ENCODE measurements at regions of chr15 and their contacts with region 1.

Region 1: GRCh38 chr15:51750792-51751685 is at the start of gene TMOD2:
- DNase-seq: peak in 7 of 9 experiments; percentile 38 to 75 (median 52)
- ATAC-seq: peak; percentile 88
- H3K4me3 ChIP-seq: peak within 1 kb of the TSS; percentile 63 to 64
- H3K4me3 Mint-ChIP-seq: peak within 1 kb of the TSS; percentile 89
- H3K27ac ChIP-seq: peak within 1 kb of the TSS in 1 of 2 experiments; percentile 7
- H3K27ac Mint-ChIP-seq: peak within 1 kb of the TSS; percentile 74
- H3K4me1 ChIP-seq: peaks cover 13% of the 10 kb centered on the region
- H3K4me1 Mint-ChIP-seq: peaks cover 46% of the 10 kb centered on the region
- H3K27me3 ChIP-seq: peaks cover 0 to 2% of the 10 kb centered on the region in 2 experiments
- H3K27me3 Mint-ChIP-seq: no peaks in the 10 kb centered on the region
- CTCF ChIP-seq: no peak
- total RNA-seq, gene TMOD2: 5.1 to 5.3 TPM

Region 2: GRCh38 chr15:51731549-51732267 is 19.3 kb before region 1 on chr15:
- CTCF ChIA-PET with region 1: interaction called, 5 read pairs
- POLR2A ChIA-PET with region 1: interaction called, 22 read pairs
- intact Hi-C with region 1: loop called in 1 of 2 experiments (anchors 1 kb)
- DNase-seq: peak in 6 of 9 experiments; percentile 26 to 89 (median 50)
- ATAC-seq: peak; percentile 65
- H3K4me3 ChIP-seq: peak overlapping the region; percentile 38 to 42
- H3K4me3 Mint-ChIP-seq: peak overlapping the region; percentile 93
- H3K27ac ChIP-seq: peak overlapping the region; percentile 60 to 92
- H3K27ac Mint-ChIP-seq: peak overlapping the region; percentile 99
- H3K4me1 ChIP-seq: peaks cover 72% of the 10 kb centered on the region
- H3K4me1 Mint-ChIP-seq: peaks cover 92% of the 10 kb centered on the region
- H3K27me3 ChIP-seq: no peaks in the 10 kb centered on the region
- H3K27me3 Mint-ChIP-seq: no peaks in the 10 kb centered on the region
- CTCF ChIP-seq: no peak

Measured in CD8-positive, alpha-beta T cell (primary cell).